ENCODE measurements at regions of chr2 and their contacts with region 1.

Region 1: GRCh38 chr2:68742626-68743415 is 8.2 kb downstream of the ARHGAP25 start:
- DNase-seq: peak; percentile 2 to 59
- H3K4me3 ChIP-seq: no peak overlapping the region
- CTCF ChIP-seq: no peak
- POLR2A ChIP-seq: no peak

Region 2: GRCh38 chr2:68441179-68441993 is 301.4 kb before region 1 on chr2:
- intact Hi-C with region 1: no loop called
- DNase-seq: peak; percentile 81 to 92
- H3K4me3 ChIP-seq: no peak overlapping the region
- CTCF ChIP-seq: peak in 1 of 3 donors; percentile 75
- POLR2A ChIP-seq: no peak

Region 3: GRCh38 chr2:68925295-68925896 is 182.6 kb after region 1 on chr2:
- intact Hi-C with region 1: loop called (anchors 10 kb)
- DNase-seq: no peak
- H3K4me3 ChIP-seq: no peak overlapping the region
- CTCF ChIP-seq: peak in 1 of 3 donors; percentile 77
- POLR2A ChIP-seq: no peak

Measured in lower leg skin (tissue), 4 donors.